ENCODE measurements at regions of chr17 and their contacts with region 1.

Region 1: GRCh38 chr17:39676198-39676819 is 8.1 kb downstream of the PNMT start:
- DNase-seq: no peak
- H3K4me3 ChIP-seq: no peak overlapping the region
- CTCF ChIP-seq: no peak

Region 2: GRCh38 chr17:39716879-39717536 is 40.7 kb after region 1 on chr17:
- in situ Hi-C with region 1: loop called (anchors 5 kb)
- DNase-seq: no peak
- H3K4me3 ChIP-seq: no peak overlapping the region
- CTCF ChIP-seq: no peak

Region 3: GRCh38 chr17:39740357-39741131 is 64.2 kb after region 1 on chr17:
- in situ Hi-C with region 1: loop called (anchors 5 kb)
- DNase-seq: no peak
- H3K4me3 ChIP-seq: no peak overlapping the region
- CTCF ChIP-seq: no peak

Measured in astrocyte of the cerebellum (primary cell).